ENCODE measurements at regions of chr7 and their contacts with region 1.

Region 1: DNA sequence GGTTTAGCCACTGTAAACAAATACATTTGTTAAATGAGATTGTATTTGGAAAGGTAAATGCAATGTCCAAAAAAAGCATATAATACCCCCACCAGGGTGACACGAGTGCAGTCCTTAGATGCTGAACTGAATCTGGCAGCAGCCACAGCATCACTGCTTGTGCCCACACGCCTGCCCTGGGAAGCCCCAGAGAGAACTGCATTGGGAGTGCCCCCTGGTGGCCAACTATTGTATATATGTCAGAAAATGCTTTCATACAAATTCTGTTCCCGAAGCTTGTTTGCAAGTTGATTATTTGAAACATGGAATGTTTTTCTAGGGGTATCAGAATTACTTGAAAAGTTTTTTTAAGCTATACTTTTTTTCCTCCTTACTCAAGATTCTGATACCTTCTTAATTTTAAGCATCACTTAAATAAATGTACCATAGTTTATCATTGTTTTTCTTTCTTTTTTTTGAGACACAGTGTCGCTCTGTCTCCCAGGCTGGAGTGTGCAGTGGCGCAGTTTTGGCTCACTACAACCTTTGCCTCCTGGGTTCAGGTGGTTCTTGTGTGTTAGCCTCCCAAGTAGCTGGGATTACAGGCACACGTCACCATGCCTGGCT is 50.1 kb downstream of the LANCL2 start:
- DNase-seq: peak; percentile 84
- H3K4me3 ChIP-seq: no peak overlapping the region
- H3K27ac ChIP-seq: no peak overlapping the region
- H3K4me1 ChIP-seq: peaks cover 1% of the 10 kb centered on the region
- H3K27me3 ChIP-seq: no peaks in the 10 kb centered on the region
- CTCF ChIP-seq: peak; percentile 72 to 74
- POLR2A ChIP-seq: no peak

Region 2: GRCh38 chr7:54839538-54840213 is 575.6 kb before region 1 on chr7:
- CTCF ChIA-PET with region 1: no interaction called
- POLR2A ChIA-PET with region 1: no interaction called
- dilution Hi-C with region 1: no loop called
- intact Hi-C with region 1: no loop called
- DNase-seq: peak; percentile 43
- H3K4me3 ChIP-seq: no peak overlapping the region
- H3K27ac ChIP-seq: no peak overlapping the region
- H3K4me1 ChIP-seq: no peaks in the 10 kb centered on the region
- H3K27me3 ChIP-seq: peaks cover 10% of the 10 kb centered on the region in 2 experiments
- CTCF ChIP-seq: peak; percentile 68 to 78
- POLR2A ChIP-seq: no peak

Region 3: DNA sequence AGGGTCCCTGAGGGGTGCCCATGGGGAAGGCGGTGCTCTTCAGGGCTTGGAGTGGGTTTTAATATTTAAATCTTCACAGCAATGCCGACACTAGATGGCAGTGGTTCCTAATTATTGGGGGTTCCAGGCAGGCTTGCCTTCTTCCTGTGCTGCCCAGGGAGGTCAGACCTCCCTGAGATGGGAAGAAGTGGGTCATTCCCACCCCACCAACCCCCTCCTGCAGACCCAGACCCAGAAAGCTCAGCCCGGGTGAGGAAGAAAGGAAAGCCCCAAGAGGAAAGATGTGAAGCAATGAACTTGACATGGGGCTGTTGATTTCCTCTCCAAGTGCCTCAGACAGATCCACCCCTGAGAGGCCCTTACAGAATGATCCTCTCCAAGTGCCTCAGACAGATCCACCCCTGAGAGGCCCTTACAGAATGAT is 135.2 kb before region 1 on chr7:
- CTCF ChIA-PET with region 1: interaction called, 165 read pairs
- POLR2A ChIA-PET with region 1: no interaction called
- dilution Hi-C with region 1: no loop called
- intact Hi-C with region 1: loop called (anchors 1 kb)
- DNase-seq: peak; percentile 67
- H3K4me3 ChIP-seq: no peak overlapping the region
- H3K27ac ChIP-seq: no peak overlapping the region
- H3K4me1 ChIP-seq: no peaks in the 10 kb centered on the region
- H3K27me3 ChIP-seq: peaks cover 0 to 3% of the 10 kb centered on the region in 2 experiments
- CTCF ChIP-seq: peak; percentile 48 to 51
- POLR2A ChIP-seq: no peak

Region 4: DNA sequence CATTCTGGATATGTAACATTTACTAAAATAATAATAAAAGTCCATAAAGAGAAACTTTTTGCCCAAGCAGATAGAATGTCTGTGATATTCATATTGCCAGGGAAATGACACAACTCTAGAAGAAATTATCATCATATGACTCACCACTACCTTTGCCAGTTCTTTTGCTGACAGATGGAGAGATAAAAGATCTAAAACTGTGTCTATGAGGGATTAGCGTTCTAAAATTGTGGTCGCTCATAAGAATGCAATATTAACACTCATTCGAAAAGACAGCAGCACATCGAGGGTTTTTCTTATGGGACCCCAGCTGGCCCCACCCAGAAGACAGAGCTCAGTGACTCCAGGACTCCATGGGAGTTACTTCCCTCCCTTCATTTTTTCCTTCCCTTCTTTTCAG is 66.8 kb before region 1 on chr7:
- CTCF ChIA-PET with region 1: interaction called, 8 read pairs
- POLR2A ChIA-PET with region 1: no interaction called
- dilution Hi-C with region 1: no loop called
- intact Hi-C with region 1: loop called (anchors 5 kb)
- DNase-seq: peak; percentile 39
- H3K4me3 ChIP-seq: peak overlapping the region in 1 of 3 experiments; percentile 36
- H3K27ac ChIP-seq: peak overlapping the region; percentile 51
- H3K4me1 ChIP-seq: peaks cover 20% of the 10 kb centered on the region
- H3K27me3 ChIP-seq: no peaks in the 10 kb centered on the region
- CTCF ChIP-seq: no peak
- POLR2A ChIP-seq: no peak

Measured in endothelial cell of umbilical vein (primary cell).